ENCODE measurements at regions of chr20 and their contacts with region 1.

Region 1: DNA sequence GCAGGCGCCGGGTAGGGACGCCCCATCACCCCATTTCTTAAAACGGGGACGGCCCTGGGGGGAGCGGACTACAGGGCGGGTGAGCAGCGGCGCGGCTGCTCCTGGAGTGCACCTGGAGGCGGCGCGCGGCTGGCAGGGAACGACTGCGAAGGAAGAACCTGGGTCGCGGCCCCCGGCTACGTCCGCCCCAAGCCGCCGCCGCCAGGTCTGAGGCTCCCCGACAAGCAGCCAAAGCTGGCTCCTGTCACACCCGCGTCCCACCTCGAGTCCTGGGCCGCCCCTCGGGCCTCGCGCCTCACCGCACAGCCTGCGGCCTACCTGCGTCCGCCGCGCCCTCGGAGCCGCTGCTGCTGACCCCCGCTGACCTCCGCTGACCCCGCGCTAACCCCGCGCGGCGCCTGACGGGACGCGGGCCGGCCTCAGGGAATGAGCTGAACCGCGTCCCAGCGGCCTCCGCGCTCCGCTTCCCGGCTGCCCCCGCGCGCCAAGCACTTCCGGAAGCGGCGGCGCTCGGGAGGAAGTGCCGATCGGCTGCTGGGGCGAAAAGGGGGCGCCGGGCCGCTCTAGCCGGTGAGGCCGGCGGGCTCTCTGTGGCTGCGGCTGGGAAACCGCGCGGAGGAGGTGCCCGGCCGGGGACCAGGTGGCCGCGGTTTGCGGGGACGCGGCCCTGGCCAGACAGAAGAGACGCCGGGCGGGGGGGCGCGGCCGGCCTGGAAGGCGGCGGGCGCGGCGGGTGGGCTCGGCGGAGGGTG is at the starts of genes ARFRP1 and ZGPAT:
- DNase-seq: peak; percentile 91
- H3K4me3 Mint-ChIP-seq: peak within 1 kb of the TSS; percentile 80
- H3K27ac Mint-ChIP-seq: peak within 1 kb of the TSS; percentile 80
- H3K4me1 Mint-ChIP-seq: peaks cover 48% of the 10 kb centered on the region
- H3K27me3 Mint-ChIP-seq: no peaks in the 10 kb centered on the region

Region 2: GRCh38 chr20:63740627-63741354 is 33.1 kb after region 1 on chr20:
- CTCF ChIA-PET with region 1: interaction called, 10 read pairs
- DNase-seq: peak; percentile 60
- H3K4me3 Mint-ChIP-seq: peak overlapping the region; percentile 63
- H3K27ac Mint-ChIP-seq: no peak overlapping the region
- H3K4me1 Mint-ChIP-seq: peaks cover 10% of the 10 kb centered on the region
- H3K27me3 Mint-ChIP-seq: no peaks in the 10 kb centered on the region

Region 3: DNA sequence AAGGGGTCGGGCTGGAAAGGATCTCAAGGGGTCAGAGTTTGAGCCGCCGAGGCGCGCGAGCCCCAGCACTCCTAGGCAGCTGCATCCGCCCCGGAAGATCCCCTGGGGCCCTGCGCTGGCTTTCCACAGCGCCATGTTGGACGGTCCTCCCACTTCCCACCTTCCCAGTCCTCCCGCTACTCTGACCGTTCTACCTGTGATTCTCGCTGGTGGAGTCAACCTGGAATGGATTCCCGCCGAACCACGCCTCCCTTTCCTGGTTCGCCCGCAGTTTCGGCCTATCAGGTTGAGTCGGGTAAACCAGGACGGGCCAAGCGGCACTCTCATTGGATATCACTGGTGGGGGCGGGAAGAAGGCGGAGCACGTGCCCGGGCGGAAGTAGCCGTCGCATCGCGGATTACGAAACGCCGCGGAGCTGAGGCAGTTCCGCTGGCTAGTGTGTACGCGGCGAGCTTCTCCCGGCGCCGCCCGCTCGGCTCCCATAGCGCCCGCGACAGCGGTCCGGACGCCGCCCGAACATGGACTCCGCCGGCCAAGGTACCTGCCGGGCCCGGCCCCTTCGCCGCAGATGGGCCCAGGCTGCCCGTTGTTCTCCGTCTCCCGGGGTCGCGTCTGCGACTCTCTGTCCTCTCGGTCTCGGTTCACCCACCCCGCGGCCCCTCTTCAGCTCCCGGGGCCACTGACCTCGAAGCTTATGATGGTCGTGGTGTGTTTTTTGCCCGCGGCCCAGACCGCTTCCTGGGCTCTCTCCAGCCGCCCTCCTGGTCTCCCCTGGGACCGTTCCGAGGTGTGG is 157.3 kb after region 1 on chr20 and contains the start of gene TPD52L2:
- CTCF ChIA-PET with region 1: interaction called, 14 read pairs
- DNase-seq: peak; percentile 99
- H3K4me3 Mint-ChIP-seq: peak within 1 kb of the TSS; percentile 91
- H3K27ac Mint-ChIP-seq: peak within 1 kb of the TSS; percentile 94
- H3K4me1 Mint-ChIP-seq: peaks cover 25% of the 10 kb centered on the region
- H3K27me3 Mint-ChIP-seq: no peaks in the 10 kb centered on the region

Region 4: GRCh38 chr20:64024141-64024990 is 316.6 kb after region 1 on chr20:
- CTCF ChIA-PET with region 1: no interaction called
- DNase-seq: no peak
- H3K4me3 Mint-ChIP-seq: no peak overlapping the region
- H3K27ac Mint-ChIP-seq: no peak overlapping the region
- H3K4me1 Mint-ChIP-seq: no peaks in the 10 kb centered on the region
- H3K27me3 Mint-ChIP-seq: no peaks in the 10 kb centered on the region